Left cardiac atrium (tissue), 4 donors: ENCODE measurements at regions of chr9 and their contacts with region 1.

Region 1: GRCh38 chr9:128412120-128412790 is 8.4 kb upstream of the CERCAM start:
- DNase-seq: no peak
- ATAC-seq: no peak

Region 2: GRCh38 chr9:128203024-128203706 is 209.1 kb before region 1 on chr9 and contains the start of gene DNM1:
- intact Hi-C with region 1: no loop called
- DNase-seq: peak; percentile 62
- ATAC-seq: peak; percentile 85 to 93
- total RNA-seq, gene DNM1: 11.3 to 14.0 TPM

Region 3: GRCh38 chr9:128254855-128255759 is 157.1 kb before region 1 on chr9:
- intact Hi-C with region 1: no loop called
- DNase-seq: peak; percentile 76
- ATAC-seq: peak in 1 of 2 donors; percentile 55

Region 4: DNA sequence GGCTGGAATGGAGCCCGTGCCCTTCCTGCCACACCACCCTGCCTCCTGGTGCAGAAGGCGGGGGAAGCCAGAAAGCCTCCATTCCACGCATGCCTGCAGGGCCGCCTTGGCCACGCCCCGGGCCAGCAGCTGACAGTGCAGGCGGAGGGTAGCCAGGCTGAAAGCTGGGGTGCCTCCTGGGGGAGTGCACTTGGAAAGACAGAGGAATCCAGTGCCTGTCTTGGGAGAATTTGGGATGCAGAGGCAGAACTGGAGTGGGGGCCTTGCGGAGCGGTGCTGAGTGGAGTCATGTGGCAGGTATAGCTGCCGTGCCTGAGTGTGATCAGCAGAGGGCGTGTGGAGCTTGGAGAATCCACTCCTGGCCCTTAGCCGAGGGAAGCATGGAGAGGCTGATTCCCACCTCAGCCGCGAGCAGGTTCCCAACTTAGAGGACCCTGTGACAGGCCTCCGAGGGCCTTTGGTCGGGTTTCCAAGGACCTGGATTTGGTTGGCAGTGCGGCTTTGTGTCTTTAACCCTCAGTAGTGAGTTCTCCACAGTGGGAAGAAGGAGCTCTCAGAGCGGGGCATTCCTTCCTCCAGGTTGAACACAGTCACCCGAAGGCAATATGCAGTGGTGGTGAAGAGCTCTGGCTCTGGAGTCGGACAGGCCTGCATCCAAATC is 50.1 kb before region 1 on chr9:
- intact Hi-C with region 1: loop called in 1 of 2 experiments (anchors 5 kb)
- DNase-seq: peak; percentile 88
- ATAC-seq: peak; percentile 92 to 93

Region 5: DNA sequence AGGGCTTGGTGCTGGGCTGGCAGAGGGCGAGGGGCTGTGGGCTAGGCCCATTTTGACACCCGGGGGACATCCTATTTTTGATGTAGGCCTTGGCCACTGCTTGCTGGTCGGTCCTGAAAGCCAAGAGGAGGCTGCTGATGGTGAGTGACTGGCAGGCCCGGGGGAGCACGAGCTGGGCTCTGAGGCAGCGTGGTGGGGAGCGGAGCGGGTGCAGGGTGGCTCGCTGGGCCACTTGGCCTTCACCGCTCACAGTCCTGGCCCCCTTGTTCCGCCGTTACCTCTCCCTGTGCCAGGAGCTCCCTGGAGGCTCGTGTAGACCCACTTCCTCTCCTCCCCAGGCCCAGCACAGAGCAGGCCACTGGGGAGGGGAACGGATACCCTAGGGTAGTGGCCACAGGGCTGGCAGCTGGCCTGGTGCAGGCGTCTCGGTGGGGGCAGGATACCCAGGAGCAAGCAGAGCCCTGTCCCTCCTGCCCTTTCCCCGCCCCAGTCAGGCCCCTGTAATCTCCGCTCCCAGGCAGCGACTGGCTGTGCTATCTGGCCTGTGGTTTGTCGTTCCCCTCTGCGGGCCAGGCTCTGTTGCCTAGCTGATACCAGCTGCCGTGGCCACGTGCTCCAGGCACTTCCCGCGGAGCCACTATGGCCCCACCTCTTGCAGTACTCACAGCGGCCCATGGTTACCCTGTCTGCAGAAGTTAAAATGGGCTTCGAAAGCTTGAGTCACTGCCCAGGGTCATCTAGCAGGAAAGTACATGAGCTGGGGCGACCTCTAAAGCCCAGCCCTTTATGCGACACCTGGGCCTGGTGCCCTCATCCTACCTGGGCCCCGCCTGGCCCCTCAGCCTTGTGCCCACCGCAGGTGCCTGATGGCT is 657.0 kb after region 1 on chr9:
- intact Hi-C with region 1: no loop called
- DNase-seq: peak; percentile 83
- ATAC-seq: peak; percentile 93 to 96